IMR-90 (cell line): ENCODE measurements at regions of chr1 and their contacts with region 1.

Region 1: DNA sequence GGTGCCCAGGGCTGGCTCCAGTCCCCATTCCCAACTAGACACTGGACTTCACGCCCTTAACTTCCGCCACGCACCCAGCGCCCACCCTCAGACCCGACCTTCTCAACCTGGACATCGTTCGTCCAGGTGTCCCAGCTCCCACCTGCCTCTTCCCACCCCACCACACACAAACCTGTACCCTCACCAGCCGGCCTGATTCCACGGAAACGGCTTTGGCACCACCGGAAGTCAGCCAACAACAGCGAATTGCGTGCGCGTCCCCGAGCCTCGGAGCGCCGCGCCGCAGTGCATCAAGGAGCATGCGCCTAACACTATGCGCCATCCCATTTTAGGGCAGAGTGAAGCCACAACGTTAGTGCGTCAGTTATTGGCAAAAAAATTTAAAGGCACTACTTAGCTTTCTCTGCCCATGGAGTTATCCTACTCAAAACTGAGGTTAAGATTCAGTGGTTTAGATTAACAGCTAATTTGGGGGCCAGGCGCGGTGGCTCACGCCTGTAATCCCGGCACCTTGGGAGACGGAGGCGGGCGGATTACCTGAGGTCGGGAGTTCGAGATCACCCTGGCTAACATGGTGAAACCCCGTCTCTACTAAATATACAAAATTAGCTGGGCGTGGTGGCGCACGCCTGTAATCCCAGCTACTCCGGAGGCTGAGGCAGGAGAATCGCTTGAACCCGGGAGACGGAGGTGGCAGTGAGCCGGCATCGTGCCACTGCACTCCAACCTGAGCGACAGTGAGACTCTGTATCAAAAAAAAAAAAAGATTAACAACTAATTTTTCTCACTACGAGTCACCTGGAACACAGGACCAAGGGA is at the start of gene GON4L:
- DNase-seq: peak; percentile 91
- ATAC-seq: peak; percentile 60
- H3K4me3 ChIP-seq: peak within 1 kb of the TSS; percentile 65
- H3K27ac ChIP-seq: peak within 1 kb of the TSS; percentile 86
- H3K4me1 ChIP-seq: no peaks in the 10 kb centered on the region; the same call in 1 of the 2 replicates
- H3K27me3 ChIP-seq: no peaks in the 10 kb centered on the region
- CTCF ChIP-seq: no peak
- POLR2A ChIP-seq: peak; percentile 60; the same call in 1 of the 2 replicates
- RAD21 ChIP-seq: peak; percentile 14; the same call in 1 of the 2 replicates
- total RNA-seq, gene GON4L: 29.4 and 30.3 TPM in 2 replicates

Region 2: GRCh38 chr1:155773221-155773620 is 84.0 kb before region 1 on chr1:
- CTCF ChIA-PET with region 1: no interaction called
- POLR2A ChIA-PET with region 1: interaction called, 21 read pairs
- dilution Hi-C with region 1: no loop called
- in situ Hi-C with region 1: no loop called
- intact Hi-C with region 1: no loop called
- DNase-seq: no peak
- ATAC-seq: no peak
- H3K4me3 ChIP-seq: no peak overlapping the region
- H3K27ac ChIP-seq: no peak overlapping the region
- H3K4me1 ChIP-seq: no peaks in the 10 kb centered on the region
- H3K27me3 ChIP-seq: no peaks in the 10 kb centered on the region
- CTCF ChIP-seq: no peak
- POLR2A ChIP-seq: no peak
- RAD21 ChIP-seq: no peak

Region 3: DNA sequence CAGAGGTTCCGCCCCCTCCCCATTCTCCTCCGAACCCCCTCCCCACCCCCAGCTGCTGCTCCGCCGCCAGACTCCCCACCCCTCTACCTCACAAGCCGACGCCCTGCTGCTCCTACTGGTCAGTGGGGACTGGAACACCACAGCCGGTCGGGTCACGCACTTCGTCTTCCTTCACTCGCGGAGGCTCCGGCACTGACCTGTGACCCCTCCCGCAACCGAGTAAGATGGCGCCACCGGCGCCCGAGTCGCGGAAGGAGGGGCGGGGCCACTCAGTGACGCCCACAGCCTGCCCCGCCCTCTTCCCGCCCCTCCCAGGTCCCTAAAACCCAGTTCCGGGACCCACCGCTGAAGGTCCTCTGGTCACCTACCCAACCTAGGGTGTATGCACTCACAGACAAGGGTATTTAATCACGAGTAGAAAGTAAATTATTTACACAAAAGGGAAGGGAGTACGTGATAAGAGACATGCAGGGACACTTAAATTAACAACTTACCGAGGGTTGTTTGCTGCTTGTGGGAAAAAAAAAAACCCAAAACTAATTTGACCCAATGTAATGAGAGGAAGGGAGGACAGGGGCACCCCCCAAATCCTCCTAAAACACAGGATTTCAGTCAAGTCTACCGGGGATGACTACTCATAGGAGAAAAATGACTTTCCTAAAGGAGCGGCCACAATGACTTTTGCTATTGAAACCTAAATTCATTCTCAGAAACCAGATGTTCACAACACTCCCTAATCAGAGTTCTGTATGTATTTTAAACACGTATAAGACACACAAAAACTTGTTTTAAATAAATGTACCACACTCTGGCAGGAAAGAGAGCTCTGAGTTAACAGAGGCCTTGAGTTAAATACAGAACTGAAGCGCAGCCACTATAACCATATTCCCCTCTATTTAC is 54.2 kb after region 1 on chr1 and contains the start of gene RIT1:
- CTCF ChIA-PET with region 1: no interaction called
- POLR2A ChIA-PET with region 1: no interaction called
- dilution Hi-C with region 1: no loop called
- in situ Hi-C with region 1: no loop called
- intact Hi-C with region 1: loop called (anchors 2 kb)
- DNase-seq: peak; percentile 72
- ATAC-seq: peak; percentile 89
- H3K4me3 ChIP-seq: peak within 1 kb of the TSS; percentile 70
- H3K27ac ChIP-seq: peak within 1 kb of the TSS; percentile 81
- H3K4me1 ChIP-seq: peaks cover 5% of the 10 kb centered on the region; the same call in 1 of the 2 replicates
- H3K27me3 ChIP-seq: no peaks in the 10 kb centered on the region
- CTCF ChIP-seq: no peak
- POLR2A ChIP-seq: peak; percentile 62
- RAD21 ChIP-seq: no peak
- total RNA-seq, gene RIT1: 46.8 and 52.2 TPM in 2 replicates